ENCODE measurements at regions of chr2 and their contacts with region 1.

Region 1: DNA sequence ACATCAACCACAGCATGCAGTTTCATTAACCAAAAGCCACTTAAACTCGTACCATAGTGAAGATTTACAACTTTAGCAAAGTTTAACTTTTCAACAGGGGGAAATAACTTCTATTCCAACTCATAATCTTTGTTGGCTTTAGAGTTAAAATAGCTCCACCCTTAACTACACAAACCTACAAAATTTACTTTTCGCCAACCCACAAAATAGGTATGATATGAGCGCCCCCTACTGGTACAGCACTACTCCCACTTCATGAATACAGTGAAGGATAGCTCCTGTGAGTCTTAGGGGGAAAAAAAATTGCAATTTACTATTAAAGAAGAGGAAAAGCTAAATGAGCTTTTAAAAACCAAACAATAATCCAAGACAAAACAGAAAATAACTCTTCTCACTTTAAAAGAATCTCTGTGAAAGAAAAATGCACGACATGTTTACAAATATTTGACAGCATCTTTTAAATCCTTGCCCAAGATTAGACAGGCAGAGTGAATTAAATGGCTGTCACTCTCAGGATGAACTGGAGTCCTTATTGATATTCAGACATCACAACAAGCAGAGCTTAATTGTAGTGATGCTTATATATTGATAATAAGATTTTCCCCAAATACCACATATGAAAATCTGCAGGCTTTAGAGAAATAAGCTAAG is 32.2 kb downstream of the TMEFF2 start:
- DNase-seq: peak; percentile 87
- H3K4me3 ChIP-seq: no peak overlapping the region
- H3K27ac ChIP-seq: peak overlapping the region; percentile 16
- H3K4me1 ChIP-seq: peaks cover 12% of the 10 kb centered on the region
- H3K27me3 ChIP-seq: no peaks in the 10 kb centered on the region
- CTCF ChIP-seq: peak; percentile 68 to 73
- POLR2A ChIP-seq: no peak

Region 2: DNA sequence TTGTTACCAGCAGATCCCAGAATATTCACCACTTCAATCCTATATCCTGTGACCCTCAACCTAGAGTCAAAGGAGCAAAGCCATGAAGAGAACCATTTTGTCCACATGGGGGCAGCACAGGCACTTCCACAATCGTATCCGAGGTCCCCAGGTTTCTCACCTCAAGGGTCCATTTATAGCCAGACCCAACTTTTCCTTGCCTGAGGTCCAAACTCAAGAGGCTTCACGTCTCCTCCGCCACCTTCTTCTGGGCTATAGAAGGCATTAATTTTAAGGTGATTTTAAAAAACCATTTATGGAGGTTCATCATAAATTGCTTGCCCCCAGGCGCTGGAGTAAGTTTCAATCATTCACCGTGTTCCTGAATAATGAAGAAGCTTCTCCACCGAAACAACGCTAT is 596.2 kb before region 1 on chr2:
- CTCF ChIA-PET with region 1: interaction called, 11 read pairs
- POLR2A ChIA-PET with region 1: no interaction called
- dilution Hi-C with region 1: no loop called
- intact Hi-C with region 1: no loop called
- DNase-seq: peak; percentile 54
- H3K4me3 ChIP-seq: no peak overlapping the region
- H3K27ac ChIP-seq: no peak overlapping the region
- H3K4me1 ChIP-seq: peaks cover 3% of the 10 kb centered on the region
- H3K27me3 ChIP-seq: peaks cover 6 to 16% of the 10 kb centered on the region in 2 experiments
- CTCF ChIP-seq: peak; percentile 64 to 82
- POLR2A ChIP-seq: no peak

Region 3: GRCh38 chr2:191831410-191831994 is 331.0 kb before region 1 on chr2:
- CTCF ChIA-PET with region 1: interaction called, 186 read pairs
- POLR2A ChIA-PET with region 1: interaction called, 4 read pairs
- dilution Hi-C with region 1: no loop called
- intact Hi-C with region 1: loop called (anchors 5 kb)
- DNase-seq: peak; percentile 85
- H3K4me3 ChIP-seq: no peak overlapping the region
- H3K27ac ChIP-seq: peak overlapping the region; percentile 8
- H3K4me1 ChIP-seq: peaks cover 20% of the 10 kb centered on the region
- H3K27me3 ChIP-seq: no peaks in the 10 kb centered on the region
- CTCF ChIP-seq: no peak
- POLR2A ChIP-seq: peak; percentile 51

Region 4: DNA sequence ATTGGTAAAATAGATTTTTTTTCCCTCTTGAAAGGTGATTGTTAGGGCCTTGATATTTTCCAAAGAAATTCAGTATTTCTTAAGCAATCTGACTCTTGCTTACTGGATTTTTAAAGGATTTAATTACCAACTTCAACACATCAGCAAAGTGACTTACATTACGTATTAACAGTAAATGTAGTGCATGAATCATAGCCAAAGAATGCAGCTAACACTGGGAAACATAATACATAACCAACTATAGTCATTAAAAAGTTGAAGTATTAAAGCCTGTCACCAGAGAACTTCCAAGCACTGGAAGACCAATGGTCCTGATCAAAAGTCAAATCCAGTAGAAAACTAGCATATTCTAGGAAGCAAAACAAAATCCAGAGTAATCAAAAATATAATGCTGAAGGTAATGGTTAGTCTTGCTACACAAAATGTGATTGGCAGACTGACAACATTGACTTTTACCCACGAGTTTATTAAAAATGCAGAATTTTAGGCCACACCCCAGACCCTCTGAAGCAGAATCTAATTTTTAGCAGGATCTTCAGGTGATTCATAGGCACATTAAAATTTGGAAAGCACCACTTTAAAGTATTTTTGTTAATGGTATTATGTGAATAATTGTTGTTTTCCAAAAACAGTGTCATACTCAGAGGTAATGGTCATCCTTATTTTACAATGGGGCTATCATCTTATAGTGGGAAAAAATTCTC is 283.8 kb before region 1 on chr2:
- CTCF ChIA-PET with region 1: interaction called, 10 read pairs
- POLR2A ChIA-PET with region 1: no interaction called
- dilution Hi-C with region 1: no loop called
- intact Hi-C with region 1: no loop called
- DNase-seq: peak; percentile 91
- H3K4me3 ChIP-seq: no peak overlapping the region
- H3K27ac ChIP-seq: peak overlapping the region; percentile 44
- H3K4me1 ChIP-seq: peaks cover 18% of the 10 kb centered on the region
- H3K27me3 ChIP-seq: no peaks in the 10 kb centered on the region
- CTCF ChIP-seq: no peak
- POLR2A ChIP-seq: no peak

Region 5: DNA sequence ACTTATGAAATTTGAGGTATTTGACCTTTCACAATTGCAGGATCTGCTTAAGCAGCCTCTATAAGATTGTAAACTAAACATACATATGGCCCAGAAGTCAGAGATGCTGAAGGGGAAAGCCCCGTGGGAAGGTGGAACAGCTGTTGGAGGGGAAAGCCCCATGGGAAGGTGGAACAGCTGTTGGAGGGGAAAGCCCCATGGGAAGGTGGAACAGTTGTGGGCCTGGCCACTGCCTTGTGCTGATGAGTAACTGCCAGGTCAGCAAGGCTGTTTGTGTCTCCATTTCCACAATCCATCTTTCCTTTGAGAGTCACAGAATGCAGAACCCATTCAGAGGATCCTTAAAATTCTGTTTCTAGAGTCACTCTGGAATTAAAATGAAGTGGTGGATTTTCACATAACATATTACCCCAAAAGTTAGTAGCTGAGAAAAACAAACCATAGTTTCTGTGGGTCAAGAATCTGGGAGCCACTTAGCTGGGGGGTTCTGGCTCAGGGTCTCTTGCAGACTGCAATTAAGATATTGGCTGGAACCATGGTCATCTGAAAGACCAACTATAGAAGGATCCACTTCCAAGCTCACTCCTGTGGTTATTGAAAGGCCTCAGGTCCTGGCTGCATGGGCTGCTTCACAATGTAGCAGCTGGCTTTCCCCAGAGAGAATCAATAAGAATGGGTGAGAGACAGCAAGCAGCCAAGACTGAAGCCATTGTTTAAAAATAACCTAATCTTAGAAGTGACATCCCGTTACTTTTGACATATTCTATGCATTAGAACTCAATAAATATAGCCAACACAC is 229.0 kb before region 1 on chr2:
- CTCF ChIA-PET with region 1: interaction called, 36 read pairs
- POLR2A ChIA-PET with region 1: no interaction called
- dilution Hi-C with region 1: no loop called
- intact Hi-C with region 1: loop called (anchors 1 kb)
- DNase-seq: peak; percentile 33
- H3K4me3 ChIP-seq: no peak overlapping the region
- H3K27ac ChIP-seq: no peak overlapping the region
- H3K4me1 ChIP-seq: peaks cover 25% of the 10 kb centered on the region
- H3K27me3 ChIP-seq: no peaks in the 10 kb centered on the region
- CTCF ChIP-seq: no peak
- POLR2A ChIP-seq: no peak

Region 6: GRCh38 chr2:192194866-192195547 is 32.5 kb after region 1 on chr2 and contains the start of gene TMEFF2:
- CTCF ChIA-PET with region 1: interaction called, 31 read pairs
- POLR2A ChIA-PET with region 1: no interaction called
- dilution Hi-C with region 1: no loop called
- intact Hi-C with region 1: no loop called
- DNase-seq: peak; percentile 61
- H3K4me3 ChIP-seq: peak within 1 kb of the TSS; percentile 38 to 75 (median 43)
- H3K27ac ChIP-seq: no peak within 1 kb of the TSS
- H3K4me1 ChIP-seq: peaks cover 27% of the 10 kb centered on the region
- H3K27me3 ChIP-seq: peaks cover 48 to 89% of the 10 kb centered on the region in 2 experiments
- CTCF ChIP-seq: peak; percentile 24 to 32
- POLR2A ChIP-seq: no peak
- total RNA-seq, gene TMEFF2: 0.12 and 0.20 TPM in 2 replicates

Region 7: DNA sequence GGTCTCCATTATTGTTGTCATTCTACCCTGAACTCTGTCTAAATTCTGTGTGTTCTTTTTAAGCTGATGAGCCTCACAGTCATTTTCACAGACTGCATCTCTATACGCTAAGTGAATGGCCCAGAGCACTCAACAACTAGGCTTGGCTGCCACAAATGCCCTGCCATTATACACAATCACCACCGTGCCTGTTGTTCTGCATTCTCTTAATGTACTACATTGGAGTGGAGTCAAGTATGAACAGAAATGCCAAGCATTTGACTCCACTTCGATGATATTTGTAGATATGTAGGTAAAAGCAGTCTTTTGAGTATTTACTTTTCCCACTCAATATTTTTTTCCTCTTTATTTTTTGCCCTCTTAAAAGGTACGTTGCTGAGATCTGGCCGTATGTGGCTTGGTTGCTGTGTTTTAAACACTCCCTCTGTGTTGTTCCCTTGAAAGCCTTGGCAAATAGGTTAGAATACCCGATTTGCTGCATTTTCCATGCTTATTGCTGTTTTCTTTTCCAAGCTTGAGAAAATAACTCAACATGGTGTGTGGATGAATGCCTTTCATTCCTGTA is 68.5 kb after region 1 on chr2:
- CTCF ChIA-PET with region 1: no interaction called
- POLR2A ChIA-PET with region 1: no interaction called
- dilution Hi-C with region 1: no loop called
- intact Hi-C with region 1: no loop called
- DNase-seq: no peak
- H3K4me3 ChIP-seq: no peak overlapping the region
- H3K27ac ChIP-seq: no peak overlapping the region
- H3K4me1 ChIP-seq: no peaks in the 10 kb centered on the region
- H3K27me3 ChIP-seq: peaks cover 0 to 5% of the 10 kb centered on the region in 2 experiments
- CTCF ChIP-seq: no peak
- POLR2A ChIP-seq: no peak